ENCODE measurements at regions of chr7 and their contacts with region 1.

Region 1: GRCh38 chr7:28179120-28180030 is 1.2 kb downstream of the JAZF1 start:
- DNase-seq: peak; percentile 50 to 78 (median 63)
- H3K4me3 ChIP-seq: peak overlapping the region; percentile 37 to 89 (median 74)
- H3K27ac ChIP-seq: peak overlapping the region in 50 of 59 donors; percentile 9 to 90 (median 74)
- H3K27me3 ChIP-seq: no peaks in the 10 kb centered on the region
- CTCF ChIP-seq: no peak

Region 2: DNA sequence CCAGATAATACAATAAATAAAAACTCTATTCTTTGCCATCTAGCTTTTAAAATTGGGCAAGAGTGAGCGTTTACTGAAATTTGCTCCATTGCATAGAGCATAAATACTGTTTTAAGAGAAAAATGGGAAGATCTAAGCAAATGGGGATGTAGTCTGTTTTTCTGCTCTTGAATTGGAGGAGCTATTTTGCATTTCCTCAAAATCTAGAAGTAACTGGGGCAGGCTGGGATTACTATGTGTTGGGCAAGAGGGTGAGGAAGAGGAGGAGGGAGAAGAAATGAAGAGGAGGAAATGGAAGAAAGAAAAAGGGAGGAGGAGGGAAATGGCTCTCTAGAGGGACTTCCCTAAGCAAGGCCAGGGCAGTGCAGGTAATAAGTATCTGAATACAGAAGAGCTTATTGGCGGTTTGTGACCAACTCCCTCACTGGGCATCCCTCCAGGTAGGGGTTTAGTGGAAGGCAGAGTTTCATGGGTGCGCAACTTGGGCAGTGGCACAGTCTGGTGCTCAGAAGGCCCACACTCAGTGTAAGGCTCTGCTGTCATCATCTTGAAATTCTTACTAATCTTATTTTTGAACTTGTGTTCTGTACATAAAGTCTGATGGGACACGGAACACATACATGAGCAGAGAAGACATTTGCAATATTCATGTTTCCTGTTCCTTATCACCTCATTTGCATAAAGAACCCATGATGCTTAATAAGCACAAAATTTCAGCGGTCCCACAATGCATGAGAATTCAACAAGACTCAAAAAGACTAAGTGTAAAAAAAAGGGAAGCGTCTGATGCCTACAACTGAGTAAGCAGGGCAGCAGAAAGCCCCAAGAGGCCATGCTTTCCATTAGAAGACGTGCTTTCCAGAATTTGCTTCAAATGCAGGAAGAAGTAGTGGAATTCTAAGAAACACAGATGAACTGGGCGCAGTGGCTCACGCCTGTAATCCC is 819.9 kb before region 1 on chr7:
- intact Hi-C with region 1: no loop called
- DNase-seq: no peak
- H3K4me3 ChIP-seq: no peak overlapping the region
- H3K27ac ChIP-seq: no peak overlapping the region
- H3K27me3 ChIP-seq: peaks cover 0 to 14% (median 0%) of the 10 kb centered on the region in 45 donors
- CTCF ChIP-seq: no peak

Region 3: DNA sequence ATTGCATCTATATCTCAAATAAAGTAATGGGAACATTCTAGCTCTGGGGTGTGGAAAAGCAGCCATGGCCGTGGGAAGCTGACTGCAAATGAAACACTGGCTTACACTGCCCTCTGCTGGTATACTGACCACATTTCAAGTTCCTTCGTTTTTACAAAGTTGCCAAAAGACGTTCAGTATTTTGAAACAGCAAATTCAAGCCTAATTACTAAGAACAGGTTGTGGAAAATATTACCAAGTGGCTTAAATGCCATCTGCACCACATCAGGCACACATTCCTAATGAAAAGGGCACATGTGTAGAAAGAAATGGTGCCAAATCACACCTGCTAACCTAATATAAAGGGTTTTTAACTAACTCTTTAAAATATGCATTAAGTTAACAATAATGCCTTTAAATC is 82.7 kb before region 1 on chr7:
- intact Hi-C with region 1: loop called in 1 of 2 experiments (anchors 10 kb)
- DNase-seq: peak in 6 of 10 donors; percentile 44 to 74 (median 59)
- H3K4me3 ChIP-seq: no peak overlapping the region
- H3K27ac ChIP-seq: peak overlapping the region in 1 of 59 donors; percentile 9
- H3K27me3 ChIP-seq: no peaks in the 10 kb centered on the region
- CTCF ChIP-seq: peak; percentile 66 to 96 (median 89)

Region 4: DNA sequence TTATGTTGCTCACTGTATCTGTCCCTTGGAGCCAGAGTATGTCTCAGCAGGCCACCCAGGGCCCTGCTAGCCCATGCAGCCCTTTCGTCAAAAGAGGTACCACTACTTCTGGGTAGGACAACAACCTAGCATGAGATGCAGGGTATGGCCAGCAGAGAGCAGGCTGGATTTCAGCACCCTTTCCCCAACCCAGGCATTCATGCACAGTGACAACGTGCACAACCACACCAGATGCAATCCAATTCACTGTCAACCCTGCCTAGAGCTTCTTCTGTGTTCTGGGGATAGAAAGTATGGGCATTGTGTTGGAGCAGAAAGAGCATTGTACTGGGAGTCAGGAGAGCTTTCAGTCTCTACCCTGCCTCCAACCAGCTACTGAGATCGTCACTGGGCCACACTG is 36.7 kb before region 1 on chr7:
- intact Hi-C with region 1: loop called in 1 of 2 experiments (anchors 2 kb)
- DNase-seq: peak in 8 of 10 donors; percentile 19 to 62 (median 48)
- H3K4me3 ChIP-seq: peak overlapping the region in 1 of 59 donors; percentile 5
- H3K27ac ChIP-seq: peak overlapping the region in 45 of 59 donors; percentile 11 to 89 (median 62)
- H3K27me3 ChIP-seq: no peaks in the 10 kb centered on the region
- CTCF ChIP-seq: peak in 52 of 56 donors; percentile 23 to 79 (median 48)

Region 5: GRCh38 chr7:28272461-28272877 is 93.1 kb after region 1 on chr7:
- intact Hi-C with region 1: loop called (anchors 5 to 10 kb)
- DNase-seq: peak; percentile 26 to 71 (median 58)
- H3K4me3 ChIP-seq: peak overlapping the region in 38 of 59 donors; percentile 2 to 56 (median 28)
- H3K27ac ChIP-seq: no peak overlapping the region
- H3K27me3 ChIP-seq: no peaks in the 10 kb centered on the region
- CTCF ChIP-seq: peak; percentile 22 to 82 (median 70)

Measured in dorsolateral prefrontal cortex (tissue), 120 donors.